CD8-positive, alpha-beta T cell (primary cell): ENCODE measurements at regions of chr1 and their contacts with region 1.

Region 1: GRCh38 chr1:64469977-64470664 is at the start of gene CACHD1:
- DNase-seq: peak; percentile 7 to 86 (median 70)
- ATAC-seq: peak; percentile 85
- H3K4me3 ChIP-seq: peak within 1 kb of the TSS; percentile 48 to 65
- H3K4me3 Mint-ChIP-seq: peak within 1 kb of the TSS; percentile 91
- H3K27ac ChIP-seq: no peak within 1 kb of the TSS
- H3K27ac Mint-ChIP-seq: no peak within 1 kb of the TSS
- H3K4me1 ChIP-seq: peaks cover 10% of the 10 kb centered on the region
- H3K4me1 Mint-ChIP-seq: peaks cover 23% of the 10 kb centered on the region
- H3K27me3 ChIP-seq: peaks cover 0 to 3% of the 10 kb centered on the region in 2 experiments
- H3K27me3 Mint-ChIP-seq: peaks cover 31% of the 10 kb centered on the region
- CTCF ChIP-seq: no peak
- total RNA-seq, gene CACHD1: 3.4 TPM

Region 2: DNA sequence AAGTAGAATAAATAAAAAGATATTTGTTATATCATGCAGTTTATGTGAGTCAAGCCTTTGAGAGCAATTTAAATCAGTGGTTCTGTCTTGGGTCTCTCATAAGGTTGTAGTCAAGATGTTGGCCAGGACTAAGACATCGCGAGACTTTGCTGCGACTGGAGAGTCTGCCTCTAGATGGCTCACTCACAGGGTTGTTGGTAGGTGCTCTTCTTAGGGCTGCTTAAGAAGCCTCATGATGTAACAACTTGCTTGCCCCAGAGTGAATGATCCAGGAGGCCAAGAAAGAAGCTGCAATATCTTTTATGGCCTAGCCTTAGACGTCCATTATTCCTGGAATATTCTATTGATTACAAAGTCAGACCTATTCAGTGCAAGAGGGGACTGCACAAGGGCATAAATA is 73.3 kb before region 1 on chr1:
- CTCF ChIA-PET with region 1: no interaction called
- POLR2A ChIA-PET with region 1: no interaction called
- intact Hi-C with region 1: no loop called
- DNase-seq: no peak
- ATAC-seq: no peak
- H3K4me3 ChIP-seq: no peak overlapping the region
- H3K4me3 Mint-ChIP-seq: no peak overlapping the region
- H3K27ac ChIP-seq: no peak overlapping the region
- H3K27ac Mint-ChIP-seq: no peak overlapping the region
- H3K4me1 ChIP-seq: no peaks in the 10 kb centered on the region
- H3K4me1 Mint-ChIP-seq: no peaks in the 10 kb centered on the region
- H3K27me3 ChIP-seq: no peaks in the 10 kb centered on the region
- H3K27me3 Mint-ChIP-seq: peaks cover 3% of the 10 kb centered on the region
- CTCF ChIP-seq: no peak

Region 3: GRCh38 chr1:64539781-64540218 is 69.7 kb after region 1 on chr1:
- CTCF ChIA-PET with region 1: no interaction called
- POLR2A ChIA-PET with region 1: interaction called, 3 read pairs
- intact Hi-C with region 1: loop called in 1 of 2 experiments (anchors 5 kb)
- DNase-seq: peak in 1 of 9 experiments; percentile 22
- ATAC-seq: no peak
- H3K4me3 ChIP-seq: no peak overlapping the region
- H3K4me3 Mint-ChIP-seq: peak overlapping the region; percentile 68
- H3K27ac ChIP-seq: no peak overlapping the region
- H3K27ac Mint-ChIP-seq: peak overlapping the region; percentile 92
- H3K4me1 ChIP-seq: peaks cover 53% of the 10 kb centered on the region
- H3K4me1 Mint-ChIP-seq: peaks cover 54% of the 10 kb centered on the region
- H3K27me3 ChIP-seq: no peaks in the 10 kb centered on the region
- H3K27me3 Mint-ChIP-seq: no peaks in the 10 kb centered on the region
- CTCF ChIP-seq: no peak

Region 4: GRCh38 chr1:64550510-64550909 is 80.4 kb after region 1 on chr1:
- CTCF ChIA-PET with region 1: no interaction called
- POLR2A ChIA-PET with region 1: interaction called, 3 read pairs
- intact Hi-C with region 1: loop called in 1 of 2 experiments (anchors 2 kb)
- DNase-seq: peak in 3 of 9 experiments; percentile 11 to 63 (median 21)
- ATAC-seq: peak; percentile 94
- H3K4me3 ChIP-seq: no peak overlapping the region
- H3K4me3 Mint-ChIP-seq: peak overlapping the region; percentile 44
- H3K27ac ChIP-seq: no peak overlapping the region
- H3K27ac Mint-ChIP-seq: peak overlapping the region; percentile 58
- H3K4me1 ChIP-seq: peaks cover 28% of the 10 kb centered on the region
- H3K4me1 Mint-ChIP-seq: peaks cover 51% of the 10 kb centered on the region
- H3K27me3 ChIP-seq: no peaks in the 10 kb centered on the region
- H3K27me3 Mint-ChIP-seq: no peaks in the 10 kb centered on the region
- CTCF ChIP-seq: no peak